ENCODE measurements at regions of chr11 and their contacts with region 1.

Region 1: GRCh38 chr11:86671682-86672621 is at the start of gene ME3:
- DNase-seq: peak; percentile 56
- ATAC-seq: peak; percentile 65
- H3K4me3 ChIP-seq: peak within 1 kb of the TSS; percentile 69
- H3K27ac ChIP-seq: peak within 1 kb of the TSS; percentile 83
- H3K4me1 ChIP-seq: peaks cover 45% of the 10 kb centered on the region
- H3K27me3 ChIP-seq: no peaks in the 10 kb centered on the region
- CTCF ChIP-seq: no peak
- total RNA-seq, gene ME3: 80.8 and 83.8 TPM in 2 replicates

Region 2: DNA sequence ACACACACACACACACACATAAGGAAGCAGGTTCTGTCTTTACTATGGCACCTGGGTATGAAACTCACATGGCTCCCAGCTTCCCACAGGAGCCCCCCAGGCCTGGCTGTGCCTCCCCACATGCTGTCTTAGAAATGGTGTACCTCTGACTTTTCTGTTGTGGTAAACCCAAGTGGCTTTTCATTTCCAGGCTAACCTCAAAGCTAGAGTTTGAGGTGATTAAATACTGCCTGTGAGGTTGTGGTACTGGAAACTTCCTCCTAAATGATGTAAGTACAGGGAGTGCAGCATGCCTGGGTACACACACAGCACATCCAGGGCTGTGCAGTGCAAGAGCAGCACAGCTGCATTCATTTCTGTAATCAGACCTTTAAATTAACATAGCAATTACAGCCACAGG is 34.0 kb before region 1 on chr11:
- CTCF ChIA-PET with region 1: interaction called, 4 read pairs
- POLR2A ChIA-PET with region 1: no interaction called
- intact Hi-C with region 1: loop called (anchors 1 kb)
- DNase-seq: no peak
- ATAC-seq: peak; percentile 23; the same call in 1 of the 2 replicates
- H3K4me3 ChIP-seq: 0 out of 2 replicates have a peak overlapping the region, but pooled peaks have one; percentile 22
- H3K27ac ChIP-seq: peak overlapping the region; percentile 95
- H3K4me1 ChIP-seq: peaks cover 43% of the 10 kb centered on the region
- H3K27me3 ChIP-seq: no peaks in the 10 kb centered on the region
- CTCF ChIP-seq: no peak

Region 3: DNA sequence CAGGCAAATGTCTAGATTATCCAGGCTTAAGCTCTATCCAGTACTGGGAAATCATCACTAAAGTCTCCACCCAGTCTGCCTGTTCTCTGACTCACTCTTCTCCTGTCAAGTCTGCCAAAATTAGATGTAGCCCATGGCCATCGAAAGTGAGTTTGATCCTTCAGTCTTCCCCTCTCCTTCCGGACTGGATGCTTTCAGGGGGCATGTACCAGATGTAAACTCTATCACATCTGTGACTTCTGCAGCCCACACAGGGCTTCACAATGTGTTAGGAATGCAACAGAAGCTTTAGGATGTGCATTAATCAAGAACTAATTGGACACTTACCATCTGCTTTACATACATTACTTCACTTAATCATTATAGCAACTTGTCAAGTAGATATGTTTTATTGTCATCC is 11.9 kb before region 1 on chr11:
- CTCF ChIA-PET with region 1: no interaction called
- POLR2A ChIA-PET with region 1: no interaction called
- intact Hi-C with region 1: no loop called
- DNase-seq: peak; percentile 43
- ATAC-seq: peak; percentile 62
- H3K4me3 ChIP-seq: no peak overlapping the region
- H3K27ac ChIP-seq: no peak overlapping the region
- H3K4me1 ChIP-seq: peaks cover 13% of the 10 kb centered on the region; the same call in 1 of the 2 replicates
- H3K27me3 ChIP-seq: no peaks in the 10 kb centered on the region
- CTCF ChIP-seq: no peak

Region 4: GRCh38 chr11:86735462-86736302 is 63.7 kb after region 1 on chr11:
- CTCF ChIA-PET with region 1: no interaction called
- POLR2A ChIA-PET with region 1: no interaction called
- intact Hi-C with region 1: loop called (anchors 2 kb)
- DNase-seq: peak; percentile 77
- ATAC-seq: peak; percentile 52
- H3K4me3 ChIP-seq: 0 out of 2 replicates have a peak overlapping the region, but pooled peaks have one; percentile 5
- H3K27ac ChIP-seq: peak overlapping the region; percentile 99
- H3K4me1 ChIP-seq: peaks cover 59% of the 10 kb centered on the region
- H3K27me3 ChIP-seq: no peaks in the 10 kb centered on the region
- CTCF ChIP-seq: no peak